ENCODE measurements at regions of chr3 and their contacts with region 1.

Region 1: GRCh38 chr3:62131592-62131991 is 241.8 kb downstream of the FEZF2 start:
- DNase-seq: peak in 1 of 2 experiments; percentile 19
- H3K4me3 ChIP-seq: no peak overlapping the region
- H3K4me3 Mint-ChIP-seq: no peak overlapping the region
- H3K27ac Mint-ChIP-seq: no peak overlapping the region
- H3K4me1 ChIP-seq: no peaks in the 10 kb centered on the region
- H3K4me1 Mint-ChIP-seq: no peaks in the 10 kb centered on the region
- H3K27me3 ChIP-seq: no peaks in the 10 kb centered on the region
- H3K27me3 Mint-ChIP-seq: no peaks in the 10 kb centered on the region
- CTCF ChIP-seq: peak; percentile 22 to 55

Region 2: GRCh38 chr3:61864886-61865285 is 266.7 kb before region 1 on chr3:
- CTCF ChIA-PET with region 1: no interaction called
- POLR2A ChIA-PET with region 1: no interaction called
- intact Hi-C with region 1: loop called (anchors 5 kb)
- DNase-seq: no peak
- H3K4me3 ChIP-seq: no peak overlapping the region
- H3K4me3 Mint-ChIP-seq: no peak overlapping the region
- H3K27ac Mint-ChIP-seq: no peak overlapping the region
- H3K4me1 ChIP-seq: no peaks in the 10 kb centered on the region; the same call in 1 of the 2 replicates
- H3K4me1 Mint-ChIP-seq: peaks cover 7% of the 10 kb centered on the region
- H3K27me3 ChIP-seq: no peaks in the 10 kb centered on the region
- H3K27me3 Mint-ChIP-seq: no peaks in the 10 kb centered on the region
- CTCF ChIP-seq: no peak

Region 3: DNA sequence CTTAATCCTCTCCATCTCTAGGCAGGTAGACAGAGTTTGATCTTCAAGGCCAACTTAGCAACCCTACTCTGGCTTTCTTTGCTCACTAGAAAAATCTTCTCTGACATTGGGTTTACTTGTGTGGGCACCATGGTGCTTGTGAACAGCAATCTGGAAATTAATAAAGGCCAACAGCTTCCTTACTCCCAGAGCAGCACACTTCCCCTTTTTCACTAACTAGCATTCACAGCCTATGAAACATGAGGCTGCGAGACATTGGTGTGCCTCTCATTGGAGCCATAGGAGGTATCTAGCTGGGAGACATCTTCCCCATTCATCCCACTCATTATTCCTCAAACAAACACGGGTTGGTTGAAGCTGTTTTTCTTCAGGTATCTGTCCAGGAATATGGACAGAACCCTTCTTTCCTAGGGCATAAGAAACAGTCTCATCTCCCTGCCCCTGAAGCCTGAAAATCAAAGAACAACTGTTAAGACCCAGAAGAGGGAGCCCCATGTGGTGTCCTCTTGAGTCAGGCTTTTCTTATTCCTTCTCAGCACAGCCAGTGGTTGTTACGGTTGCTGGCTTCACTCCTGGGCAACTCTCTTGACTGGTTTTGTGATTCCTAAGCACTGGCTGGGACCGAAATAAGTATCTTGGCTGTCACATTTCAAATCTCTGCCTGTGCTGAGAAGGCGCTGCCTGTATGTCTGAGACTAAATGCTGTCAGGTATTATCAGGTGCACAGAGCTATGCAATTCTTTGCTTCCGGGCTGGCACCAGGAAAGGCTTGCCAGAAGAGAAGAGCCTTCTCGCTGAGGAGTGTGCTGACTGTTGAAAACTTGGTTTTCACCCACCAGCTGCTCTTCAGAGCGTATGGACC is 47.4 kb after region 1 on chr3:
- CTCF ChIA-PET with region 1: no interaction called
- POLR2A ChIA-PET with region 1: no interaction called
- intact Hi-C with region 1: no loop called
- DNase-seq: no peak
- H3K4me3 ChIP-seq: no peak overlapping the region
- H3K4me3 Mint-ChIP-seq: no peak overlapping the region
- H3K27ac Mint-ChIP-seq: no peak overlapping the region
- H3K4me1 ChIP-seq: no peaks in the 10 kb centered on the region
- H3K4me1 Mint-ChIP-seq: peaks cover 4% of the 10 kb centered on the region
- H3K27me3 ChIP-seq: no peaks in the 10 kb centered on the region
- H3K27me3 Mint-ChIP-seq: no peaks in the 10 kb centered on the region
- CTCF ChIP-seq: no peak

Measured in Caco-2 (cell line).